ENCODE measurements at regions of chr12 and their contacts with region 1.

Region 1: DNA sequence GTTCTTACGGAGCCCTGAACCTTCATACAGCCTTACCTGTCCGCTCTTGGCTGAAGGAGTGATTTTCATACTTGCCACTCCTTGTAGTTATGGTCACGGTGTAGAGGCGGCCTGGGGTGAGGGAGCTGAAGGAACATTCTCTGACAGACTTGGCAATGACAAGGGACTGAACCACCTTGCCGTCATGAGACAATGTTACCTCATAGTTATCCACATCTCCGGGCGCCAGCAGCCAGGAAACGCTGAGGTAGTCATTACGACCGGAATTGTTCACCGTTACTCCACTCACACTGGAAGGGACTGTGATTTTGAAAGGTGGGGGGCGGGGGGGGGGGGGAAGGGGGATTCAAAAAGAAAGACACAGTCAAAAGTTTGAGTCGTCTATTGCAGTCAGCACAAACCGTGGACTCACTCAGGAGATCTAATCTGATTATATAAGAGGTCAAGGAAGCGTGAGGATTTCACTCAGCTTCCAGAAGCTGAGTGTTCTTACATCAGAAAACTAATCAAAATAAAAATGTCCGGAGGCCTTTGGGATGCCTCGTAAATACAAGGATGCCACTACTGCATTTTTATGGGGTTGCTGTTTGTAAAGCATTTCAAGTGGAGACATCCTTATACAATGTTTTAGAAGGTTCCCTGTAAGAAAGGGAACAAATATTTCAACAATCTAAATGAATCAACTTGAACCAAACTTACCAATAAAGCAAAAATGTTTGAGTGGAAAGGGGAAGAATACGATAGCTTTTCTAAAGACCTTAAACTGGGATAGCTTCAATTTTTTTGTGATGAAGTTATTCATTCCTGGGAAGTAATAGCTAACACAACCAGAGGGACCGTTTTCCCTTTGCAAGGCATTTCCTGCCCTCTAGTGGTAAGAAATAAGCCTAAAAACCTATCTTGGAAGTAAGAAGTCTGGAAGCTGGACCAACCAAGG is 60.6 kb downstream of the PTPRB start:
- DNase-seq: no peak
- H3K4me3 ChIP-seq: no peak overlapping the region
- H3K27ac ChIP-seq: no peak overlapping the region
- H3K4me1 ChIP-seq: no peaks in the 10 kb centered on the region
- H3K27me3 ChIP-seq: no peaks in the 10 kb centered on the region
- CTCF ChIP-seq: peak; percentile 77

Region 2: GRCh38 chr12:69879041-69879960 is 697.3 kb before region 1 on chr12:
- intact Hi-C with region 1: loop called (anchors 5 kb)
- DNase-seq: peak; percentile 82
- H3K4me3 ChIP-seq: peak overlapping the region; percentile 14
- H3K27ac ChIP-seq: no peak overlapping the region
- H3K4me1 ChIP-seq: no peaks in the 10 kb centered on the region
- H3K27me3 ChIP-seq: no peaks in the 10 kb centered on the region
- CTCF ChIP-seq: peak; percentile 85

Region 3: GRCh38 chr12:69900720-69901131 is 675.9 kb before region 1 on chr12:
- intact Hi-C with region 1: loop called (anchors 5 kb)
- DNase-seq: peak; percentile 91
- H3K4me3 ChIP-seq: no peak overlapping the region
- H3K27ac ChIP-seq: no peak overlapping the region
- H3K4me1 ChIP-seq: no peaks in the 10 kb centered on the region
- H3K27me3 ChIP-seq: no peaks in the 10 kb centered on the region
- CTCF ChIP-seq: peak; percentile 85

Region 4: GRCh38 chr12:70365648-70366518 is 210.7 kb before region 1 on chr12 and contains the start of gene KCNMB4:
- intact Hi-C with region 1: loop called (anchors 10 kb)
- DNase-seq: peak; percentile 62
- H3K4me3 ChIP-seq: peak within 1 kb of the TSS; percentile 65
- H3K27ac ChIP-seq: no peak within 1 kb of the TSS
- H3K4me1 ChIP-seq: peaks cover 6% of the 10 kb centered on the region
- H3K27me3 ChIP-seq: peaks cover 11% of the 10 kb centered on the region
- CTCF ChIP-seq: no peak
- total RNA-seq, gene KCNMB4: 0.35 to 1.3 TPM

Region 5: GRCh38 chr12:70971001-70971794 is 394.6 kb after region 1 on chr12:
- intact Hi-C with region 1: no loop called
- DNase-seq: no peak
- H3K4me3 ChIP-seq: no peak overlapping the region
- H3K27ac ChIP-seq: no peak overlapping the region
- H3K4me1 ChIP-seq: no peaks in the 10 kb centered on the region
- H3K27me3 ChIP-seq: no peaks in the 10 kb centered on the region
- CTCF ChIP-seq: no peak

Measured in colonic mucosa (tissue), 4 donors.